GM12878 (cell line): ENCODE measurements at regions of chr12 and their contacts with region 1.

Region 1: GRCh38 chr12:80598004-80598606 is 109.3 kb upstream of the MYF6 start:
- DNase-seq: no peak
- ATAC-seq: peak; percentile 62; the same call in 2 of the 3 replicates
- H3K4me3 ChIP-seq: no peak overlapping the region
- H3K27ac ChIP-seq: no peak overlapping the region
- H3K4me1 ChIP-seq: no peaks in the 10 kb centered on the region
- H3K27me3 ChIP-seq: no peaks in the 10 kb centered on the region
- CTCF ChIP-seq: peak; percentile 11 to 31 (median 19); a peak in 3 of 6 replicates
- EP300 ChIP-seq: no peak
- POLR2A ChIP-seq: no peak
- RAD21 ChIP-seq: 0 out of 2 replicates have a peak, but pooled peaks have one; percentile 33

Region 2: GRCh38 chr12:80195074-80195726 is 402.9 kb before region 1 on chr12:
- CTCF ChIA-PET with region 1: no interaction called
- POLR2A ChIA-PET with region 1: no interaction called
- RAD21 ChIA-PET with region 1: no interaction called
- SMC1A ChIA-PET with region 1: no interaction called
- in situ Hi-C with region 1: no loop called
- intact Hi-C with region 1: loop called (anchors 10 kb)
- DNase-seq: no peak
- ATAC-seq: peak; percentile 87
- H3K4me3 ChIP-seq: no peak overlapping the region
- H3K27ac ChIP-seq: no peak overlapping the region
- H3K4me1 ChIP-seq: peaks cover 3% of the 10 kb centered on the region; the same call in 1 of the 2 replicates
- H3K27me3 ChIP-seq: no peaks in the 10 kb centered on the region; a peak in 1 of 4 replicates
- CTCF ChIP-seq: peak; percentile 35 to 61 (median 44); a peak in 4 of 6 replicates
- EP300 ChIP-seq: no peak
- POLR2A ChIP-seq: no peak
- RAD21 ChIP-seq: peak; percentile 55

Region 3: DNA sequence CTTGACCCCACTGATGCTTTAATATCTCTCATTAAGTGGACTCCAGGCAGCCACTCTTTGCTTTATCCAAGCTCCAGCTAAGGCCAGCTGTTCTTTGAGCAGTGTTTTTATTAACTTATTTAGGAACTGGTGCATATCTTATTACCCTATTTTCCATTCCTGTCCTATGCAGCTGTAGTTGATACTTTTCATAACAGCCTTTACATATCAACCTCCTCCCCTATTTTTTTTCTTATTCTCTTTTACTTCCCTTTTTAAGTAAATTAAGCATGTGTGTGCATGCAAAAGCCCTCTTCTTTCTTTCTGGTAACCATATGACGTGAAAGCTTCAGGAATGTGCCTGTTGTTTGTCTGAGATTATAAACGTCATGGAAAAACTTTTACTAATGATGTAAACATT is 32.8 kb before region 1 on chr12:
- CTCF ChIA-PET with region 1: no interaction called
- POLR2A ChIA-PET with region 1: no interaction called
- RAD21 ChIA-PET with region 1: no interaction called
- SMC1A ChIA-PET with region 1: no interaction called
- in situ Hi-C with region 1: no loop called
- intact Hi-C with region 1: no loop called
- DNase-seq: no peak
- ATAC-seq: no peak
- H3K4me3 ChIP-seq: no peak overlapping the region
- H3K27ac ChIP-seq: no peak overlapping the region
- H3K4me1 ChIP-seq: no peaks in the 10 kb centered on the region
- H3K27me3 ChIP-seq: no peaks in the 10 kb centered on the region
- CTCF ChIP-seq: no peak
- EP300 ChIP-seq: no peak
- POLR2A ChIP-seq: no peak
- RAD21 ChIP-seq: no peak

Region 4: GRCh38 chr12:80946594-80946993 is 348.5 kb after region 1 on chr12:
- CTCF ChIA-PET with region 1: no interaction called
- POLR2A ChIA-PET with region 1: no interaction called
- RAD21 ChIA-PET with region 1: no interaction called
- SMC1A ChIA-PET with region 1: no interaction called
- in situ Hi-C with region 1: no loop called
- intact Hi-C with region 1: loop called (anchors 5 kb)
- DNase-seq: no peak
- ATAC-seq: peak; percentile 52
- H3K4me3 ChIP-seq: no peak overlapping the region
- H3K27ac ChIP-seq: no peak overlapping the region
- H3K4me1 ChIP-seq: no peaks in the 10 kb centered on the region
- H3K27me3 ChIP-seq: no peaks in the 10 kb centered on the region
- CTCF ChIP-seq: no peak; a peak in 1 of 6 replicates
- EP300 ChIP-seq: no peak
- POLR2A ChIP-seq: no peak
- RAD21 ChIP-seq: peak; percentile 38; the same call in 1 of the 2 replicates